ENCODE measurements at regions of chr2 and their contacts with region 1.

Region 1: GRCh38 chr2:69436938-69437750 is at the start of gene NFU1:
- DNase-seq: peak; percentile 76 to 89 (median 85)
- ATAC-seq: peak; percentile 91
- H3K4me3 ChIP-seq: peak within 1 kb of the TSS; percentile 68
- H3K4me3 Mint-ChIP-seq: peak within 1 kb of the TSS; percentile 92 to 100 (median 94)
- H3K27ac ChIP-seq: peak within 1 kb of the TSS; percentile 98
- H3K27ac Mint-ChIP-seq: peak within 1 kb of the TSS; percentile 97 to 100 (median 99)
- H3K4me1 ChIP-seq: peaks cover 18 to 21% of the 10 kb centered on the region in 2 donors
- H3K4me1 Mint-ChIP-seq: peaks cover 14 to 48% (median 40%) of the 10 kb centered on the region in 7 donors
- H3K27me3 ChIP-seq: no peaks in the 10 kb centered on the region
- H3K27me3 Mint-ChIP-seq: no peaks in the 10 kb centered on the region
- total RNA-seq, gene NFU1: 16.1 to 25.8 (median 22.6) TPM

Region 2: DNA sequence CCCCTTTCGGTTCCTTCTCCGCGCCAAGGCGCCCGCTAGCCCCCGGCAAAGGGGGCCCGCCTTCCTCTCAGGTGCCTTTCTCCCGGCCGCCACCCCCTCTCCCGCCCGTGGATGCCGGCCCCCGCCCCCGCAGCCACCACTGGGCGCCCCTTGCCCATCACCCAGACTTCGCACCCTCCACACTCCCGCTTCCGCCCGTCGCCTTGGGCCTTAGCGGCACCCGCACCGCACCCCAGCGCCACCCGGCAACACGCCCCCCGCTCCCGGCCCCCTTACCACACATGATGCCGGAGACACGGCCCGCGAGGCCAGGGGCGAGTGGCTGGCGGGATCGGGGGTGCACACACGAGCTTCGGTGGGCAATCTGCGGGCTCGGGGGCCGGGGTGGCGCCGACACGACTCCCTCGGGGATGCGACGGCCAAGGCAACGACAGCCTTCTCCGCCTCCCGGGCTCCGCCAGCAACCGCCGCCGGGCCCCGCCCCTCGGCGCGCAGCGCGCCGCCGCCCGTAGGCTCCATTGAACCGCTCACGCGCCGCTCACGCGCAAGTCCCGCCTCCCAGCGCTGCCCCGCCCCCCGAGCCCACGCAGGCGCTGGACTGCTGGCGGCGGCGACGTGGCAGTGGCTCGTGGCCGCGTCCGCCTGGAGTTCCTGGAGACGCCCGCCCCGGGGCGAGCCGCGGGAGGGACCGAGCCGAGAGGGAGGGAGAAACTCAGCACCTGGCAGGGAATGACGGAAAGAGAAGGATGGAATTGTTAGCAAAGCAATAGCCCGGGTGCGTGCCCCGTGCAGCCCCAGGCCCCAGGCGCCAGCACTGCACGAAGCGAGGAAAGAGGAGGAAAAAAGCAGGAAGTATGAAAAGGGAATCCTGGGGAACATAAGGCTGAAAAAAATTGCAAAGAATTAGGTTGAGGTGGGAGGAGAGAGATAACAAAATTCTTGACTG is 50.1 kb before region 1 on chr2 and contains the start of gene GFPT1:
- CTCF ChIA-PET with region 1: interaction called, 4 read pairs
- POLR2A ChIA-PET with region 1: interaction called, 14 read pairs
- intact Hi-C with region 1: loop called (anchors 1 kb)
- DNase-seq: peak; percentile 85 to 96 (median 91)
- ATAC-seq: peak; percentile 99
- H3K4me3 ChIP-seq: peak within 1 kb of the TSS; percentile 68
- H3K4me3 Mint-ChIP-seq: peak within 1 kb of the TSS; percentile 84 to 94 (median 88)
- H3K27ac ChIP-seq: peak within 1 kb of the TSS; percentile 83
- H3K27ac Mint-ChIP-seq: peak within 1 kb of the TSS; percentile 63 to 94 (median 86)
- H3K4me1 ChIP-seq: peaks cover 17 to 18% of the 10 kb centered on the region in 2 donors
- H3K4me1 Mint-ChIP-seq: peaks cover 28 to 53% (median 41%) of the 10 kb centered on the region in 7 donors
- H3K27me3 ChIP-seq: no peaks in the 10 kb centered on the region
- H3K27me3 Mint-ChIP-seq: no peaks in the 10 kb centered on the region
- total RNA-seq, gene GFPT1: 12.8 to 29.8 (median 16.6) TPM

Region 3: DNA sequence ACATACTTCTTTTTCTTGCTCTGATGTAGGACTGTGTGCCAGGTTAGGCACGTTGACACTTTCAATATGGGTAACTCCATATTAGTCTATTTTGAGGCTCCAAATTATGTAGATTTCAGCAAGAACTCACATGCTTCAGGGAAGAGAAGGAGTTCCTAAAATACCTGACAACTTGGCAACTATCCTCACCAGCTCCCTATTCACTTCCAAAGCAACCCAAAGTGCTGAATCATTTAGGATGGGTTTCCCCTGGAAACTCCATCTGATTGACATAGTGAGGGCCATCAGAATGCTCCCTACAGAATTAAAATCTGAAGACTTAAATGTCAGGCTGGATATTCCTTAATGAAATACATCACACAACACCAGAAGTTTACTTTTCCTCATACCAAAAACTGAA is 32.6 kb after region 1 on chr2:
- CTCF ChIA-PET with region 1: interaction called, 3 read pairs
- POLR2A ChIA-PET with region 1: interaction called, 9 read pairs
- intact Hi-C with region 1: loop called in 1 of 2 experiments (anchors 5 kb)
- DNase-seq: no peak
- ATAC-seq: no peak
- H3K4me3 ChIP-seq: no peak overlapping the region
- H3K4me3 Mint-ChIP-seq: no peak overlapping the region
- H3K27ac ChIP-seq: no peak overlapping the region
- H3K27ac Mint-ChIP-seq: peak overlapping the region in 2 of 9 donors; percentile 54 to 63
- H3K4me1 ChIP-seq: no peaks in the 10 kb centered on the region
- H3K4me1 Mint-ChIP-seq: peaks cover 0 to 14% (median 3%) of the 10 kb centered on the region in 7 donors
- H3K27me3 ChIP-seq: no peaks in the 10 kb centered on the region
- H3K27me3 Mint-ChIP-seq: no peaks in the 10 kb centered on the region

Region 4: DNA sequence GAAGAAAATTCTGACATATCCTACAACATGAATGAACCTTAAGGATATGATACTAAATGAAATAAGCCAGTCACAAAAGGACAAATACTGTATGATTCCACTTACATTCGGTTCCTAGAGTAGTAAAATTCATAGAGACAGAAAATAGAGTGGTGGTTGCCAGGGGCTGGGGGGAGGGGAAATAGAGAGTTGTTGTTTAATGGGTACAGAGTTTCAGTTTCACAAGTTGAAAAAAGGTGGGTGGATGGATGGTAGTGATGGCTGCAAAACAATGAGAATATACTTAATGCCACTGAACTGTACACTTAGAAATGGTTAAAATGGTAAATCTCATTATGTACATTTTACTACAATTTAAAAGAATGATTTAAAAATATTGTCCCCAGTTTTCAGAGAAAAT is 53.3 kb after region 1 on chr2:
- CTCF ChIA-PET with region 1: no interaction called
- POLR2A ChIA-PET with region 1: no interaction called
- intact Hi-C with region 1: loop called (anchors 2 kb)
- DNase-seq: peak in 5 of 9 donors; percentile 12 to 37 (median 27)
- ATAC-seq: peak; percentile 64
- H3K4me3 ChIP-seq: no peak overlapping the region
- H3K4me3 Mint-ChIP-seq: no peak overlapping the region
- H3K27ac ChIP-seq: no peak overlapping the region
- H3K27ac Mint-ChIP-seq: peak overlapping the region; percentile 23 to 90 (median 64)
- H3K4me1 ChIP-seq: no peaks in the 10 kb centered on the region
- H3K4me1 Mint-ChIP-seq: peaks cover 10 to 43% (median 22%) of the 10 kb centered on the region in 7 donors
- H3K27me3 ChIP-seq: no peaks in the 10 kb centered on the region
- H3K27me3 Mint-ChIP-seq: no peaks in the 10 kb centered on the region

Region 5: DNA sequence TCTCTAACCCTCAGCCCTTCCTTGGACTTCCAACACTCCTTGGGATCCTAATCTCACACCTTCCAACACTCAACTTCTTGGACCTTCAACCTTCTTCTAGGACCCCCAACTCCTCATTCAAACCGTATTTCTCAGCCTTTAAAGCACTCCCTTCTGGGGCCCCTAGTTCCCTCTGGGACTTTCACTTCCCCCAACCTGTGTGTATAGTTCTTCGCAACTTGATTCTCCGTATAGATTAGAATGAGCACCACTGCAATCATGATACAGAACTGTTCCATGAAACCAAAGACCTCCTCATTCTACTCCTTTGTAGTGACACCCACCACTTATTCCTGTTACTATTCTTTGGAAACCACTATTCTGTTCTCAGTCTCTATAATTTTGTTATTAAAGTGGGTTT is 62.1 kb after region 1 on chr2:
- CTCF ChIA-PET with region 1: interaction called, 4 read pairs
- POLR2A ChIA-PET with region 1: interaction called, 15 read pairs
- intact Hi-C with region 1: loop called in 1 of 2 experiments (anchors 2 kb)
- DNase-seq: no peak
- ATAC-seq: peak; percentile 65
- H3K4me3 ChIP-seq: no peak overlapping the region
- H3K4me3 Mint-ChIP-seq: peak overlapping the region in 1 of 10 donors; percentile 7
- H3K27ac ChIP-seq: peak overlapping the region; percentile 61
- H3K27ac Mint-ChIP-seq: peak overlapping the region; percentile 9 to 94 (median 89)
- H3K4me1 ChIP-seq: peaks cover 0 to 15% of the 10 kb centered on the region in 2 donors
- H3K4me1 Mint-ChIP-seq: peaks cover 18 to 41% (median 26%) of the 10 kb centered on the region in 7 donors
- H3K27me3 ChIP-seq: no peaks in the 10 kb centered on the region
- H3K27me3 Mint-ChIP-seq: no peaks in the 10 kb centered on the region

Region 6: GRCh38 chr2:69717861-69718273 is 280.7 kb after region 1 on chr2:
- CTCF ChIA-PET with region 1: interaction called, 3 read pairs
- POLR2A ChIA-PET with region 1: no interaction called
- intact Hi-C with region 1: loop called (anchors 1 to 10 kb)
- DNase-seq: no peak
- ATAC-seq: no peak
- H3K4me3 ChIP-seq: no peak overlapping the region
- H3K4me3 Mint-ChIP-seq: no peak overlapping the region
- H3K27ac ChIP-seq: no peak overlapping the region
- H3K27ac Mint-ChIP-seq: peak overlapping the region in 1 of 9 donors; percentile 42
- H3K4me1 ChIP-seq: peaks cover 4 to 5% of the 10 kb centered on the region in 2 donors
- H3K4me1 Mint-ChIP-seq: peaks cover 6 to 24% (median 17%) of the 10 kb centered on the region in 7 donors
- H3K27me3 ChIP-seq: no peaks in the 10 kb centered on the region
- H3K27me3 Mint-ChIP-seq: peaks cover 0 to 3% (median 0%) of the 10 kb centered on the region in 5 donors

Region 7: DNA sequence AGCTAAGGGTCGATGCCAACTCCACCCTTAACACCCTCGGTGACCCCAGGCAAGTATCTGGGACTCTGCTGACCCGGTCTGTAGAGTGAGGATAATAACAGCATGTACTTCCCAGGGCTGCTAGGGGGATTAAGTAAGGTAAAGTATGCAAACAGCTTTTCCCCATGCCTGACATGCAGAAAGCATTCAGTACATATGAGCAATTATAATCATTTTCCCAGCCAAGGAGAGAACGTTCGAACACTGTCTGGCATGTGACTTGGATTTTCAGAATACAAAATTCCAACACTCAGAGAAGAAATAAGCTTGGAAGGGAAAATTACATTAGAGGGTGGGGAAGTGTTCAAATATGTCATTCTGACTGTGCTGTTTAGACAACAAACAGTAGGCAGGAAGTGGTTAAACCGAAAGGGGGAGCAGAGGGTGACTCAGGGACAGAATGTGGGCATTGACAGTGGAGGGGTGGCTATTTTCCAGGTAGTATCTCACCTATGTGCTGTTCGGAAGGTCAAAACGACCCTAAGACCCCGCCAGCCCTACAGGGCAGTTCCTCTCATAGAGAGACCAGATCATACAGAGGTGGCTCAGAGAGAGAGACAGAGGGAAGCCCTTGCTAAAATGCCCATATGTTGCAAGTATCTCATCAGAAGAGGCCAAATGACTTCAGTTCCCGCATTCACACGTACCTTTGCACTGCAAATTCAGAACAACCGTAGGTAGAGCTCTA is 509.4 kb after region 1 on chr2:
- CTCF ChIA-PET with region 1: no interaction called
- POLR2A ChIA-PET with region 1: no interaction called
- intact Hi-C with region 1: no loop called
- DNase-seq: peak in 8 of 9 donors; percentile 24 to 64 (median 56)
- ATAC-seq: peak; percentile 84
- H3K4me3 ChIP-seq: no peak overlapping the region
- H3K4me3 Mint-ChIP-seq: peak overlapping the region in 9 of 10 donors; percentile 11 to 70 (median 31)
- H3K27ac ChIP-seq: no peak overlapping the region
- H3K27ac Mint-ChIP-seq: peak overlapping the region; percentile 4 to 94 (median 69)
- H3K4me1 ChIP-seq: peaks cover 16 to 17% of the 10 kb centered on the region in 2 donors
- H3K4me1 Mint-ChIP-seq: peaks cover 25 to 47% (median 33%) of the 10 kb centered on the region in 7 donors
- H3K27me3 ChIP-seq: no peaks in the 10 kb centered on the region
- H3K27me3 Mint-ChIP-seq: peaks cover 0 to 2% (median 0%) of the 10 kb centered on the region in 5 donors

Region 8: DNA sequence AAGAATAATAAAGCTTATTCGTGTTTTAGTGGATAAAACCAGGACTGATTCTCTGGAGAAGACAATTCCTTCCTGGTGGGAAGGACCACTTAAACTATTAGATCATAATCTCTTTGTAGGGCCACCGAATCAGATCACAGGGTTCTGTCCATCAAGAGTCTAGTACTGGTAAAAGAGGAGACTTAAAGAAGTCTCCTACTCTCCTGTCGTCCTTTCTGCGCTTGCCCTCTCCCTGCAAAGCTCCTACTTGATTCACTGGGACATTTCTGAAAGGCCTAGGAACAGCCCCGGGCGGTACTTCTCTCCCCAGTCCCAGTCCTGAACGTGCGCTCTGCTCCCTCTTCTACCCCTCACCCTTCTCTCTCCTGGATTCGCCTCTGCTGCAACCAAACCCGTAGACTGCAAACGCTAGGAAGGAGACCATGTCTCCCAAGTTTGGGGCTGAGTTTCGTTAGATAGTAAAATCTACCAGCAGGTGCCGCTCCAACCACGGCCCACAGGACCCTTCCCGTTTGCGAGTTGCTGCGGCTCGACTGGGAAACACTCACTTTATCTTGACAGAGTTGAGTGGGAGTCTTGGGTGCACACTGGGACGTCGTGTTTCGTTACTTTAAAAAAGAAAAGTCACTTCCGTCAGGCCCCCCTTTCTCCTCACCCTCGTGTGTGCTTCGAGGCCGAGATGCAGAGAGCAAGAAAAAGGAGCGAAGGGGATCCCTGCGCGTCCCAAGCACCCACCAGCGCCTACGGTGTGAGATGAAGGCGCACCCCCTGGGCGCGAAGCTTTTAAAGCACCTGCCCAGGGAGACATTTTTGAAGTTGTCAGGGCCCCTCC is 1352.4 kb after region 1 on chr2:
- CTCF ChIA-PET with region 1: no interaction called
- POLR2A ChIA-PET with region 1: no interaction called
- intact Hi-C with region 1: no loop called
- DNase-seq: peak; percentile 44 to 70 (median 67)
- ATAC-seq: peak; percentile 81
- H3K4me3 ChIP-seq: peak overlapping the region; percentile 43
- H3K4me3 Mint-ChIP-seq: peak overlapping the region; percentile 79 to 93 (median 86)
- H3K27ac ChIP-seq: no peak overlapping the region
- H3K27ac Mint-ChIP-seq: peak overlapping the region in 1 of 9 donors; percentile 69
- H3K4me1 ChIP-seq: no peaks in the 10 kb centered on the region
- H3K4me1 Mint-ChIP-seq: peaks cover 9 to 22% (median 12%) of the 10 kb centered on the region in 7 donors
- H3K27me3 ChIP-seq: peaks cover 0 to 5% of the 10 kb centered on the region in 2 donors
- H3K27me3 Mint-ChIP-seq: peaks cover 41 to 70% (median 47%) of the 10 kb centered on the region in 5 donors